PC-3 (cell line): ENCODE measurements at regions of chr3 and their contacts with region 1.

Region 1: GRCh38 chr3:111768571-111769100 is 90.4 kb upstream of the PHLDB2 start:
- DNase-seq: peak; percentile 97
- ATAC-seq: peak; percentile 88
- H3K4me3 ChIP-seq: 0 out of 2 replicates have a peak overlapping the region, but pooled peaks have one; percentile 6
- H3K27ac ChIP-seq: peak overlapping the region; percentile 62
- H3K4me1 ChIP-seq: peaks cover 45% of the 10 kb centered on the region
- H3K27me3 ChIP-seq: no peaks in the 10 kb centered on the region
- CTCF ChIP-seq: no peak

Region 2: GRCh38 chr3:111810909-111811308 is 42.3 kb after region 1 on chr3:
- CTCF ChIA-PET with region 1: no interaction called
- POLR2A ChIA-PET with region 1: no interaction called
- intact Hi-C with region 1: loop called (anchors 5 kb)
- DNase-seq: peak; percentile 98
- ATAC-seq: peak; percentile 80
- H3K4me3 ChIP-seq: peak overlapping the region; percentile 29; the same call in 1 of the 2 replicates
- H3K27ac ChIP-seq: peak overlapping the region; percentile 85
- H3K4me1 ChIP-seq: peaks cover 55% of the 10 kb centered on the region
- H3K27me3 ChIP-seq: no peaks in the 10 kb centered on the region
- CTCF ChIP-seq: no peak

Region 3: GRCh38 chr3:111910806-111911205 is 142.2 kb after region 1 on chr3:
- CTCF ChIA-PET with region 1: no interaction called
- POLR2A ChIA-PET with region 1: no interaction called
- intact Hi-C with region 1: no loop called
- DNase-seq: no peak
- ATAC-seq: peak; percentile 14; the same call in 1 of the 2 replicates
- H3K4me3 ChIP-seq: no peak overlapping the region
- H3K27ac ChIP-seq: no peak overlapping the region
- H3K4me1 ChIP-seq: peaks cover 3% of the 10 kb centered on the region
- H3K27me3 ChIP-seq: no peaks in the 10 kb centered on the region
- CTCF ChIP-seq: no peak